Caco-2 (cell line): ENCODE measurements at regions of chr13 and their contacts with region 1.

Region 1: DNA sequence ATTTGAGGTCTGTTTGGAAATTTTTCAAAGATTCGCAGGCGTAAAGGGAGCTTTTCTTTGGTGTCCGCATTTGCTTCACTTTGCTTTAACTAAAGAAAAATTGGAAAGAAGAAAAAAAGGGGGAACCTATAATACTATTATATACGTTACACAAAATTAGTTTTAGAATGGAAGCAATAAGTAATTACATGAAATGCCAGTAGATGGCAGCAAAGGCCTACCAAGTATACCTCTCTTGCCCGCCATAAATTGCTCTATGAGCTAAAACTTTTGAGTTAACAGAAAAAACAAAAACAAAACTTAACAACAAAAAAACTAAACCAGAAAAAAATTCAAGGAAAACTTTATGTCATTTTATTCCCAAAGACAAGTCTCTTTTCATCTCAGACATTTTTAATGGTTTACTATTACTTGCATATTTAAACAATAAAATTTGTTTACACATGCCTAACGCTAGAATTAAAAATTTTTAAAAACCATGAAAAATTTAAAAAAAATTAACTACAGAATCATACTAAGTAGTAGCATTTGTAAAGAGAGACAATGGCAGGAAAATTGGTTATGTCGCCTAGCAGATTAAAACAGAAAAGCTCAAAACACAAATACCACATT is 271.4 kb downstream of the NALCN start:
- DNase-seq: peak in 1 of 2 experiments; percentile 47
- H3K4me3 ChIP-seq: no peak overlapping the region
- H3K4me3 Mint-ChIP-seq: no peak overlapping the region
- H3K27ac Mint-ChIP-seq: no peak overlapping the region
- H3K4me1 ChIP-seq: no peaks in the 10 kb centered on the region
- H3K4me1 Mint-ChIP-seq: no peaks in the 10 kb centered on the region
- H3K27me3 ChIP-seq: peaks cover 2% of the 10 kb centered on the region; the same call in 1 of the 2 replicates
- H3K27me3 Mint-ChIP-seq: peaks cover 29% of the 10 kb centered on the region
- CTCF ChIP-seq: peak; percentile 53 to 63

Region 2: DNA sequence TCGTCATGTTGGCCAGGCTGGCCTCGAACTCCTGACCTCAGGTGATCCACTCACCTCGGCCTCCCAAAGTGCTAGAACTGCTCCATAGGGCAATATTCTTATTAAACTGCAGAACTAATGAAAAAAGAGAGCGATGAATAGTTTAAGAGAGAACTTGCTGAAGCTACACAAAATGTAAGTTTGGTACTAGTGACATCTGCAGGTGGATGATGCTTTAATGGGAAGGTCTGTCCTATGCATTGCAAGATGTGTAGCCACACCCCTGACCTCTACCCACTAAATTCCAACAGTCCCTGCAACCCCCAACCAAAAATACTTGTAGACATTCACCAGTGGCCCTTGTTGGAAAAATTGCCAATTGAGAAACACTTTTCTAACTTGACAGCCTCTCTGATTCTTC is 153.6 kb after region 1 on chr13:
- CTCF ChIA-PET with region 1: interaction called, 3 read pairs
- POLR2A ChIA-PET with region 1: no interaction called
- intact Hi-C with region 1: loop called (anchors 2 kb)
- DNase-seq: no peak
- H3K4me3 ChIP-seq: no peak overlapping the region
- H3K4me3 Mint-ChIP-seq: no peak overlapping the region
- H3K27ac Mint-ChIP-seq: no peak overlapping the region
- H3K4me1 ChIP-seq: no peaks in the 10 kb centered on the region
- H3K4me1 Mint-ChIP-seq: no peaks in the 10 kb centered on the region
- H3K27me3 ChIP-seq: no peaks in the 10 kb centered on the region
- H3K27me3 Mint-ChIP-seq: no peaks in the 10 kb centered on the region
- CTCF ChIP-seq: no peak

Region 3: DNA sequence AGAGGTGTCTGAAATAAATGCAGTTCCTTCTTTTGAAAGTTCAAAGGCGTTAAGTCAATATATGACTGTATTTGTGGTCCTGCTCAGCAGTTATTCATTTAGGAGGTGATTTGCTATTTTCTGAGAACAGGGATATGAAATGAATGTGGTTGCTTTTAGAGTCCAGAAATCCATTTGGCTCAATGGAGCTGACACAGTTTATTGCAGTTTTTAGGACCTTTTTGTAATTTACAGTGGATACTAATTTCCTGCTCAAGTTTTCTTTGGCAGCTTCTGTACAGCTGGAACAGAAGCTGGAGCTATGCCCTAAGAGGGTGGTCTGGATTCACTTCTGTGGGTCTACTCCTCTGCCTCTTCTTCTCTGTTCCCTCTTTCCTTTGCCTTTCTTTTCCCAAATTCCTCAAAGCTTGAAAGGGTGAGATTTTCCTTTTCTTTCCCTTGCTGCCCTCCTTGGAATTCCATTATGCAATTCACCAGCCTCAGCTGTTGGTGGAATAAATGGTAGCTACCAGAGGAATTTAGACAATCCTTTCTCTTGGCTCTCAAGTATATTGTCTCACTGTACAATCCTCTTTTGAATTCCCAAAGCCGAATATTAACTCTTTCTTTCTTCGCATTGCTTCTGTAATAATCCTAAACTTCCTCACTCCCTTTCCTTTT is 347.5 kb after region 1 on chr13:
- CTCF ChIA-PET with region 1: no interaction called
- POLR2A ChIA-PET with region 1: no interaction called
- intact Hi-C with region 1: no loop called
- DNase-seq: no peak
- H3K4me3 ChIP-seq: no peak overlapping the region
- H3K4me3 Mint-ChIP-seq: no peak overlapping the region
- H3K27ac Mint-ChIP-seq: no peak overlapping the region
- H3K4me1 ChIP-seq: no peaks in the 10 kb centered on the region
- H3K4me1 Mint-ChIP-seq: no peaks in the 10 kb centered on the region
- H3K27me3 ChIP-seq: no peaks in the 10 kb centered on the region
- H3K27me3 Mint-ChIP-seq: peaks cover 7% of the 10 kb centered on the region
- CTCF ChIP-seq: no peak

Region 4: DNA sequence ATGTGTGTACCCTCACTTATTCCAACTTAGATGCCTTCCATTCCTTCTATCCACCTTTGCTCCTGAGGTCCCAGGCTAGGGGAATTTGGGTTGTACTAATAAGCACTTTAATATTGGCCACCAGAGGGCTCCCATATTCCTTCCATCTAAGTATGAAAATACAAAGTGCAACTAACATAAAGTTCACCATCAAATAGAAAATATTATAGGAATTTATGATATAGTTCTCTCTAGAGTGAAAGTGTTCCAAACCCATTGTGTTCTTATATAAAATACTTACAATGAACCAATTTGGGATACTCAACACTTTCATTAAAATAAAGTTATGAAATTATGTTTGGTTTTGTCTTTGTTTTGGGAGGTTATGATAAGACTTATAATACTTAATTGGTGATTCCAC is 369.9 kb after region 1 on chr13:
- CTCF ChIA-PET with region 1: no interaction called
- POLR2A ChIA-PET with region 1: no interaction called
- intact Hi-C with region 1: loop called (anchors 2 kb)
- DNase-seq: peak in 1 of 2 experiments; percentile 47
- H3K4me3 ChIP-seq: no peak overlapping the region
- H3K4me3 Mint-ChIP-seq: no peak overlapping the region
- H3K27ac Mint-ChIP-seq: no peak overlapping the region
- H3K4me1 ChIP-seq: no peaks in the 10 kb centered on the region
- H3K4me1 Mint-ChIP-seq: no peaks in the 10 kb centered on the region
- H3K27me3 ChIP-seq: no peaks in the 10 kb centered on the region
- H3K27me3 Mint-ChIP-seq: peaks cover 3% of the 10 kb centered on the region
- CTCF ChIP-seq: peak; percentile 62 to 77

Region 5: GRCh38 chr13:101942038-101942437 is 797.1 kb after region 1 on chr13:
- CTCF ChIA-PET with region 1: interaction called, 3 read pairs
- POLR2A ChIA-PET with region 1: no interaction called
- intact Hi-C with region 1: loop called (anchors 2 kb)
- DNase-seq: peak in 1 of 2 experiments; percentile 39
- H3K4me3 ChIP-seq: no peak overlapping the region
- H3K4me3 Mint-ChIP-seq: no peak overlapping the region
- H3K27ac Mint-ChIP-seq: no peak overlapping the region
- H3K4me1 ChIP-seq: no peaks in the 10 kb centered on the region
- H3K4me1 Mint-ChIP-seq: no peaks in the 10 kb centered on the region
- H3K27me3 ChIP-seq: no peaks in the 10 kb centered on the region
- H3K27me3 Mint-ChIP-seq: peaks cover 3% of the 10 kb centered on the region
- CTCF ChIP-seq: peak; percentile 30 to 78